HEK293T (cell line): ENCODE measurements at regions of chr2 and their contacts with region 1.

Region 1: GRCh38 chr2:190319555-190320498 is at the start of gene HIBCH:
- DNase-seq: peak; percentile 91

Region 2: DNA sequence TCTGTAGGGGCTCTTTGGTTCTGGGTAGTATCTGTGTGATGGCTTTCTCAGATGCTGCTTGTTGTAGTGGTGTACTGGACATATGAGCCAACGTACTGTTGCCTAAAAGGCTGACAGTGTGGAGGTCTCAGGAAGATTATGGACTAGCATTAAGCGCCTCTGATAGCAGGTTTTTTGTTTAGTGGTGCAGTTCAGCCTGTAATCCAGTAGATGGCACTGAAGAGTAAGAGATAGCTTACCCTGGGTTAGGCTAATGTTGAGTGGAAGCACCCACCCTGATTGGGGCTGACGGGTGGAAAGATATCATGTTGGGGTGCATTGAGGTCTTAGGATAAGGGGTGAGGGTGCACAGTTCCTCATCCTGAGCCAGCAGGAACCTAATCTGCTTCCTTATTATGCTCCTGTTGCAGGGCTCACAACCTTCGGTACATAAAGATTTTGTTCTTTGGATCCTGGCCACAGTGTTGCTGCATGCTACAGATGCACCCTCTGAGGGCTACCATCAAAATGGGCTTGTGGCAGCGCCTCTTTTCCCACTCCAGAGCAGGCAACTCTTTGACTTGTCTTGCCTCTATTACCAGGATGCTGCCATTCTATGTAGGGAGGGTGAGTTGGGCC is 336.9 kb before region 1 on chr2:
- CTCF ChIA-PET with region 1: no interaction called
- POLR2A ChIA-PET with region 1: no interaction called
- DNase-seq: peak; percentile 49

Region 3: GRCh38 chr2:190343500-190344275 is 23.9 kb after region 1 on chr2 and contains the start of gene INPP1:
- CTCF ChIA-PET with region 1: no interaction called
- POLR2A ChIA-PET with region 1: interaction called, 17 read pairs
- DNase-seq: peak; percentile 48

Region 4: GRCh38 chr2:190354003-190354690 is 34.3 kb after region 1 on chr2:
- CTCF ChIA-PET with region 1: no interaction called
- POLR2A ChIA-PET with region 1: no interaction called
- DNase-seq: no peak

Region 5: GRCh38 chr2:190425221-190425866 is 105.5 kb after region 1 on chr2:
- CTCF ChIA-PET with region 1: no interaction called
- POLR2A ChIA-PET with region 1: no interaction called
- DNase-seq: no peak